IMR-90 (cell line): ENCODE measurements at regions of chr18 and their contacts with region 1.

Region 1: GRCh38 chr18:74652392-74652988 is 54.8 kb downstream of the ZNF407 start:
- DNase-seq: peak; percentile 66
- ATAC-seq: peak; percentile 75
- H3K4me3 ChIP-seq: no peak overlapping the region
- H3K27ac ChIP-seq: no peak overlapping the region
- H3K4me1 ChIP-seq: peaks cover 6% of the 10 kb centered on the region
- H3K27me3 ChIP-seq: no peaks in the 10 kb centered on the region
- CTCF ChIP-seq: peak; percentile 73
- POLR2A ChIP-seq: no peak
- RAD21 ChIP-seq: peak; percentile 77

Region 2: GRCh38 chr18:74597662-74598349 is 54.7 kb before region 1 on chr18 and contains the start of gene ZNF407:
- CTCF ChIA-PET with region 1: no interaction called
- POLR2A ChIA-PET with region 1: no interaction called
- dilution Hi-C with region 1: no loop called
- in situ Hi-C with region 1: no loop called
- intact Hi-C with region 1: no loop called
- DNase-seq: peak; percentile 91
- ATAC-seq: peak; percentile 88
- H3K4me3 ChIP-seq: peak within 1 kb of the TSS; percentile 86
- H3K27ac ChIP-seq: peak within 1 kb of the TSS; percentile 99
- H3K4me1 ChIP-seq: peaks cover 7% of the 10 kb centered on the region
- H3K27me3 ChIP-seq: no peaks in the 10 kb centered on the region
- CTCF ChIP-seq: no peak
- POLR2A ChIP-seq: peak; percentile 88
- RAD21 ChIP-seq: no peak
- total RNA-seq, gene ZNF407: 20.1 and 25.6 TPM in 2 replicates

Region 3: GRCh38 chr18:75041586-75041985 is 389.1 kb after region 1 on chr18:
- CTCF ChIA-PET with region 1: no interaction called
- POLR2A ChIA-PET with region 1: no interaction called
- dilution Hi-C with region 1: no loop called
- in situ Hi-C with region 1: no loop called
- intact Hi-C with region 1: loop called (anchors 2 kb)
- DNase-seq: peak; percentile 50
- ATAC-seq: 0 out of 2 replicates have a peak, but pooled peaks have one; percentile 33
- H3K4me3 ChIP-seq: no peak overlapping the region
- H3K27ac ChIP-seq: no peak overlapping the region
- H3K4me1 ChIP-seq: peaks cover 4% of the 10 kb centered on the region
- H3K27me3 ChIP-seq: no peaks in the 10 kb centered on the region
- CTCF ChIP-seq: peak; percentile 42
- POLR2A ChIP-seq: no peak
- RAD21 ChIP-seq: peak; percentile 48

Region 4: DNA sequence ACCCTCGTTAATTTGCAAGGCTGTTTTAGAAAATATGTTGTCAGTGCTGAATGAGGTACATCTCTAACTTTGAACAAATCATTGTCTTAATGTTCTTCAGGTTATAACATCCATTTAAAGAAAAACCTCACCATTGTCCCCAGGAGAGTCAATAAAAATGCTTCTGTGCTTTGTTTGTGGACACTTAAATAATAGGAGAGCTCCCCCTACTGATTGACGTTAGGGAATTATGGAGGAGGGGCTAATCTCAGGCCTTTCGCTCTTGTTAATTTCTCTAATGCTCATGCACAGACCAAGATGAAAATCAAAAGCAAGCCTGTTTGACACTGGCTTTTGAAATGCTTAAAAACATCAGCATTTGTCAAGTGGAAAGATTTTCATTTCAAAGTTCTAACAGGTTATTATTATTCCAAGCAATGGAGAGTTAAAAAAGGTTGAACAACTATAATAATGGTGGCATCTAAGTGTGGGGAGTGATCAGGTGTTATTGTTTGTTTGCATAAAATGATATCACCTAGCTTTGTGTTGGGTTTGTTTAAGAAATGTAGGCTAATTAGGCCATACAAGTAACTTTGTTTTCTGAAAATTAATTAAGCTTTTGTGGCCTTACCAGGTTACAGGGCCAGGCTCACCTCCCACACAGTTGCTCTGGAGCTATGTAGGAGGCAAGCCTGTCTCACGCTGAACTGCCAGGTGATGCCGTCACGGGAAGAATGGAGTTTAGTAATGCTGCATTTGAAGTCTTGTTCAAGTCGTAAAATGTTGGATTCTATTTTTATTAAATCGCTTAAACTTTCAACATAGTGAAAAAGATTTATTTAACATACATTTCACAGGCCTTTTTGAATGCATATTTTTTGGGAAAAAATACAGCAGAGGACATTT is 826.7 kb after region 1 on chr18:
- CTCF ChIA-PET with region 1: no interaction called
- POLR2A ChIA-PET with region 1: no interaction called
- dilution Hi-C with region 1: no loop called
- in situ Hi-C with region 1: loop called (anchors 5 kb)
- intact Hi-C with region 1: loop called (anchors 2 kb)
- DNase-seq: peak; percentile 59
- ATAC-seq: peak; percentile 49
- H3K4me3 ChIP-seq: no peak overlapping the region
- H3K27ac ChIP-seq: no peak overlapping the region
- H3K4me1 ChIP-seq: peaks cover 11% of the 10 kb centered on the region
- H3K27me3 ChIP-seq: no peaks in the 10 kb centered on the region
- CTCF ChIP-seq: peak; percentile 70
- POLR2A ChIP-seq: no peak
- RAD21 ChIP-seq: peak; percentile 72

Region 5: GRCh38 chr18:75727456-75727855 is 1075.0 kb after region 1 on chr18:
- CTCF ChIA-PET with region 1: interaction called, 3 read pairs
- POLR2A ChIA-PET with region 1: no interaction called
- dilution Hi-C with region 1: no loop called
- in situ Hi-C with region 1: loop called (anchors 25 kb)
- intact Hi-C with region 1: loop called (anchors 5 kb)
- DNase-seq: peak; percentile 30
- ATAC-seq: 0 out of 2 replicates have a peak, but pooled peaks have one; percentile 44
- H3K4me3 ChIP-seq: no peak overlapping the region
- H3K27ac ChIP-seq: no peak overlapping the region
- H3K4me1 ChIP-seq: no peaks in the 10 kb centered on the region
- H3K27me3 ChIP-seq: peaks cover 2% of the 10 kb centered on the region
- CTCF ChIP-seq: peak; percentile 48
- POLR2A ChIP-seq: no peak
- RAD21 ChIP-seq: peak; percentile 66

Region 6: DNA sequence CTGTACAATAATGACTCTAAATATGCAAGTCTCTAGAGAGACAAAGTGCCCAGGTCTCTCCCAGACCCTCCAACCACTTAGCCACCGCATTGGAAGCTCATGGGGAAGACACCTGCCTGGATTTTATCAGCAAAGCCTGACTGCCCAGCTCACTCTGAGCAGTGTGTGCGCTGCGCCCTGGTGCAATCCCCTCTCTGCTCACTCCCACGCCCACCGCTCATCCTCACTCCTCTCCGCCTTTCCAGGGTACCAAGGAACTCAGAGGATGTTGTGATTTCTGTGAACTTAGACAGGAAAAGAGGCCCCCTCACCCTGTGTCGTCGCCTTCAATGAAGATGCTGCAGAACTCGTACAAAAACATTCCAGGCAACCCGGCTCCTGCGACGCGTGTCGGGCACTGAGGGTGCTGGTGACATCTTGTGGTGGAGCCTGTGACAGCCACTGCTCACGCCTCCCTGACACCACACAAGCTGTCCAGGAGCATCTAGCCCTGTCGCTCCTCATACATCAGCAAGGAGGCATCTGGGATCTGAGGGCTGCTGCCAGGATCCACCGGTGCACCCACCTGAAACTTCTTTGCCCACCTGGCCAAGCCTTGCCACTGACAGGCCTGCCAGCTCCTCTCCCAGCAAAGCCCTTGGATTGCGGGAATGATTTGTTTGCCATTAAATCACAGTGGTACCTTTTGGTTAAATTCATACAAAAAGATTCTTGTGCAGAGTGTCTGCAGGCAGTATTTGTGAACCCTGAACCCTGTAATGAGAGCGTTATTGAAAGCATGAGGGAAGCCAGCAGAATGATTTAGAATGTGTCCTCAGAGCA is 1622.2 kb after region 1 on chr18:
- CTCF ChIA-PET with region 1: no interaction called
- POLR2A ChIA-PET with region 1: no interaction called
- dilution Hi-C with region 1: no loop called
- in situ Hi-C with region 1: loop called (anchors 25 kb)
- intact Hi-C with region 1: no loop called
- DNase-seq: no peak
- ATAC-seq: peak; percentile 62
- H3K4me3 ChIP-seq: no peak overlapping the region
- H3K27ac ChIP-seq: no peak overlapping the region
- H3K4me1 ChIP-seq: no peaks in the 10 kb centered on the region
- H3K27me3 ChIP-seq: peaks cover 4% of the 10 kb centered on the region
- CTCF ChIP-seq: no peak
- POLR2A ChIP-seq: no peak
- RAD21 ChIP-seq: no peak